Vagina (tissue), 2 donors: ENCODE measurements at regions of chr15 and their contacts with region 1.

Region 1: DNA sequence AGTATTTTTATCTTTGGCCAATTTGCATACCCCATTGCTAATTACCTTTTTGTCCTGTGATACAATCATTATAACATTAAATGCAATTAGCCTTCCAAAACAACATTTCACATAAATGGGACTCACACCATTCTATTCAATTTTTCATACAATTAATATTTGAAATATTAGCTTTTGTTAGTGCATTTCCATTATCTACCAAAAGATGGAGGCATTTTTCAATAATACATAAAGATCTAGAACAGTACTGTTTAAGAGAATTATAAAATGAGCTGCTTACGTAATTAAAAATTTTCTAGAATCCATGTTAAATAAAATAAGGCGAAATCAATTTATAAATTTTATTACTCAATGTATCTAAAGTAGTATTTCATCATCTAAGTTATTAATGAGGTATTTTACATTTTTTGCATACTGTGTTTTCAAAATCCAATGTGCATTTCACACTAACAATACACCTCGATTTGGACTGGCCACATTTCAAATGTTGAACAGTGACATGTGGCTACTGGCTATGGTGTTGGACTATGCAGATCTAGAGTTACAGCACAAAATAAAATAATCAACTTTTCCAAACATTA is 74.3 kb downstream of the TJP1 start:
- DNase-seq: no peak
- H3K4me3 ChIP-seq: no peak overlapping the region
- H3K27ac ChIP-seq: no peak overlapping the region
- H3K4me1 ChIP-seq: no peaks in the 10 kb centered on the region
- H3K27me3 ChIP-seq: no peaks in the 10 kb centered on the region
- CTCF ChIP-seq: peak in 1 of 3 experiments; percentile 46
- POLR2A ChIP-seq: no peak

Region 2: GRCh38 chr15:29556380-29556779 is 191.5 kb before region 1 on chr15:
- intact Hi-C with region 1: no loop called
- DNase-seq: no peak
- H3K4me3 ChIP-seq: no peak overlapping the region
- H3K27ac ChIP-seq: no peak overlapping the region
- H3K4me1 ChIP-seq: no peaks in the 10 kb centered on the region
- H3K27me3 ChIP-seq: no peaks in the 10 kb centered on the region
- CTCF ChIP-seq: no peak
- POLR2A ChIP-seq: no peak

Region 3: GRCh38 chr15:29815000-29815710 is 67.2 kb after region 1 on chr15:
- intact Hi-C with region 1: loop called (anchors 5 kb)
- DNase-seq: no peak
- H3K4me3 ChIP-seq: no peak overlapping the region
- H3K27ac ChIP-seq: no peak overlapping the region
- H3K4me1 ChIP-seq: peaks cover 82% of the 10 kb centered on the region
- H3K27me3 ChIP-seq: no peaks in the 10 kb centered on the region
- CTCF ChIP-seq: no peak
- POLR2A ChIP-seq: no peak

Region 4: GRCh38 chr15:29925227-29926082 is 177.5 kb after region 1 on chr15:
- intact Hi-C with region 1: loop called (anchors 10 kb)
- DNase-seq: no peak
- H3K4me3 ChIP-seq: no peak overlapping the region
- H3K27ac ChIP-seq: no peak overlapping the region
- H3K4me1 ChIP-seq: peaks cover 5% of the 10 kb centered on the region
- H3K27me3 ChIP-seq: no peaks in the 10 kb centered on the region
- CTCF ChIP-seq: peak; percentile 15 to 63 (median 30)
- POLR2A ChIP-seq: no peak